ENCODE measurements at regions of chr13 and their contacts with region 1.

Region 1: DNA sequence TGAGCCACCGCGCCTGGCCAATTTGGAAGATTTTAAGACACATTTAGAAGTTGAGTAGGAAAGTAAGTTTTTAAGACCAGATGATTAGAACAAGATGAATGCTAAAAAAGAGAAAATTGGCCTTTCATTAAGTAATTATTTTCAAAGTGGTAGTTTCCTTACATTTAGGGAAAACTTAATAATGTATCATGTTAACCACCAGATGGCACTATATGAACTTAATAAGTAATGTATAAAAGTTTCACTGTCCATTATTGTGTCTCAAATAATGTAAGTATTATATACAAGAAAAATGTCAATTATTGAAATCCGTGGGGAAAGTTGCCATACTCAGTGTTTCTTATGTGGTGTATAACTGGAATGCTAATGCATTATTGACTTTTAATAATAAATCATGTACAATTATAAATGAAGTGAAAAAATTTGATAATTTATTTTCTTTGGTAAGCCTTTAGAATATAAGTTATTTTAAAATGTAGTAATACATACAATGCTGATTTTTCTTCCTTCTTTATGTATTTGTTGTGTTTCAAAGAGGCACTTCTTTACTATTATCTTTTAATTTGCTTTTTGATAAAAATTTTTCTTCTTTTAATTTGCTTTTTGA is 29.2 kb downstream of the COG6 start:
- DNase-seq: peak; percentile 7
- H3K4me3 ChIP-seq: no peak overlapping the region
- CTCF ChIP-seq: peak; percentile 4

Region 2: GRCh38 chr13:39347926-39348901 is 336.4 kb before region 1 on chr13:
- CTCF ChIA-PET with region 1: no interaction called
- POLR2A ChIA-PET with region 1: no interaction called
- DNase-seq: no peak
- H3K4me3 ChIP-seq: no peak overlapping the region
- CTCF ChIP-seq: no peak

Region 3: GRCh38 chr13:39672378-39673132 is 12.1 kb before region 1 on chr13:
- CTCF ChIA-PET with region 1: interaction called, 31 read pairs
- POLR2A ChIA-PET with region 1: no interaction called
- DNase-seq: no peak
- H3K4me3 ChIP-seq: no peak overlapping the region
- CTCF ChIP-seq: no peak

Region 4: DNA sequence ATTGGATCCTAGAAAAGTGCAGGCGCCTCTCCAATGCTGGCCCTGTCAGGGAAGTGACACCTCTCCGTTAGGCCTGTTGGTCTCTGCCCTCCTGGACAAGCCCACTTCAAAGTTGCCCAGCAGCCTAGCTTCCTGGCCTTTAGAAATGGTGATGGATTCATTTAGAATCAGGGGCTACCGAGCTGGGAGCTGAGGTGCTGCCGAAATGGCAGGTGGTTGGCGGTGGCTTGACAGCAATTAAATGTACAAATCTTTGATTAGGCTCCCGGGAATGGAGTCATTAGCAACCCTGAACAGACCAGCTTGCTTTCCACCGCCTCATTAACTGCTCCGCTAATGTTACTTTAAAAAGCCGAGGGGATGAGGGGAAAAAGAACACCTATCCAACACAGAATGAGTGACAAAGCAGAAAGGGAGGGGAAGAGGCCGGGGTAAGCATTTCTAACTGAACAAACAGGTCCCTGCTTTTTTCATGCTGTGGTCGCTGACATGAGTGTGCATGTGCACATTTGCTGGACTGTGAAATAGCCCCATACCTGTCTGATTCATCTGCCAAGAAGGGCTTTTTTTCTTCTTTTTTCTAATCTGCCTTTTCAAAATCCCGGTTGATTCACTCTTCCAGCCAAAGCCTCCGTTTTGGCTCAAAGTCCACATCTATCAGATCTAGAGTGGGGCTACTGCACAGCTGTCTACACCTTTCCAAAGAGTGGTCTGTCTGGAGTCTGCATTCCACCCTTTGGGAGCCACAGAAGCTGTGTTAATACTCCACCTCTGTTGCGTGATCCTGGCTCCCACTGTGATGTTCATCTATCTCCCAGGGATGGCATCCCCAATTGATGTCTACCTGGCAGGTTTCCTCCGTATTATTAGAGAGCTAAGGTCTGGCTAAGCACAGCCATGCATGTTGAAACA is 402.7 kb after region 1 on chr13:
- CTCF ChIA-PET with region 1: no interaction called
- POLR2A ChIA-PET with region 1: no interaction called
- DNase-seq: no peak
- H3K4me3 ChIP-seq: no peak overlapping the region
- CTCF ChIP-seq: no peak

Region 5: DNA sequence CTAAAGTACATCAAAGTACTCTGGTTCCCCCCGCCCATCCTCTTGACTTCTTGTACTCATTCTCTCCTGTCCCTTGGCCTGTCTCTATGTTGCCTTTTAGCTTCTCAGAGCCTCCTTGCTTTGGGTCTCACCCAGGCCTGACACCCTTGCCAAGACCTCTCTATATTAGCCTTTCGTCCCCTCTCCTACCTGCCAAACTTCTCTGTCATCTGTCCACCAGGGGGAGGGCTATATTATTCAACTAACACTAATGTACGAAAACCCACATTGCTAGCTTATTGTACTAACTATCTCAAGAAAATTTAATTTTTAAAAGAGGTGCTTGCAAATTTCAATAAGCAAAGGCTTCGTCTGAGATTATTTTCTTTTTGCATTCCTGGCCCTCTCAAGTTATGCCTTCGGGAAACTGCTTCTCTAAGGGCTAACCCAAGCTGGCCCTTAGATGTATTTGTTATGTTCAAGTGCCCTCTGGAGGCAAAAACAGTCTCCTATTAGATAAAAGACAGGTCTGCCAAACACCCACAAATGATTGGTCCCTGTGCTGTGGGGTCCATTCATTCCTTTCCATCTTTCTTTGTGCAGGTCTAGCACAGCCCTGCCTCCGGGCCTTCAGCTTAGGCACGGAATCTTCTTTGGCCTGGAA is 1092.7 kb after region 1 on chr13:
- CTCF ChIA-PET with region 1: interaction called, 11 read pairs
- POLR2A ChIA-PET with region 1: no interaction called
- DNase-seq: no peak
- H3K4me3 ChIP-seq: no peak overlapping the region
- CTCF ChIP-seq: peak; percentile 33

Region 6: GRCh38 chr13:41053384-41053826 is 1368.8 kb after region 1 on chr13:
- CTCF ChIA-PET with region 1: no interaction called
- POLR2A ChIA-PET with region 1: no interaction called
- DNase-seq: no peak
- H3K4me3 ChIP-seq: no peak overlapping the region
- CTCF ChIP-seq: no peak

Measured in AG04449 (cell line).